Activated naive CD4-positive, alpha-beta T cell treated with anti-CD3 and anti-CD28 coated beads for 36 hours (primary cell): ENCODE measurements at regions of chr20 and their contacts with region 1.

Region 1: DNA sequence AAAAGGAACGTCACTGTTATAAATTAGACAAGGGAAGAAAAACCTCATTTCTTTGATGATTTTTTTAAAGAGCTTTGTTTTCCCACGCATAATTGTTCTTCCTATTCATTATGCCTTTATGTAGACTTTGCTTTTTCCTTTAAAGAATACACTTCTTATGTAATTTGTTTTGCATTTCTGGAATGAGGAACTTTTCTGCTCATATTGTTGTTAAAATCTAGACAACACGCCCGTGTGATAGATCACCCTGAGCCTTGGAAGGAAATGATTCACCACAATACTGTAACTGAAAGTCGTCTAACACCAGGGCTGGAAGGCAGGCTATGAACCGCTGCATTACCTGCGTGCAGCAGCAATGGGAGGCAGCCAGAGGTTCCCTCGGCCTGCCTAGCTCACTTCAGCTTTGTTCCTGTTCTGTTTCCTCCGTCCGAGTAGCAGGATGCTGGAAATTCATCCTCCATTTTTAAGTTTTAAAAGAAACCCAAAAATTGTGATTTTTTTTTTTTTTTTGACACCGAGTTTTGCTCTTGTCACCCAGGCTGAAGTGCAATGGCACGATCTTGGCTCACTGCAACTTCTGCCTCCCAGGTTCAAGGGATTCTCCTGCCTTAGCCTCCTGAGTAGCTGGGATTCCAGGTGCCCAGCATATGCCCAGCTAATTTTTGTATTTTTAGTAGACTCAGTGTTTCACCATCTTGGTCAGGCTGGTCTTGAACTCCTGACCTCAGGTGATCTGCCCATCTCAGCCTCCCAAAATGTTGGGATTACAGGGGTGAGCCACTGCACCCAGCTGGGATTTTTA is 49.6 kb upstream of the ZNF217 start:
- DNase-seq: peak; percentile 82
- H3K4me3 Mint-ChIP-seq: peak overlapping the region; percentile 66
- H3K27ac Mint-ChIP-seq: peak overlapping the region; percentile 85
- H3K4me1 Mint-ChIP-seq: peaks cover 40% of the 10 kb centered on the region
- H3K27me3 Mint-ChIP-seq: no peaks in the 10 kb centered on the region

Region 2: DNA sequence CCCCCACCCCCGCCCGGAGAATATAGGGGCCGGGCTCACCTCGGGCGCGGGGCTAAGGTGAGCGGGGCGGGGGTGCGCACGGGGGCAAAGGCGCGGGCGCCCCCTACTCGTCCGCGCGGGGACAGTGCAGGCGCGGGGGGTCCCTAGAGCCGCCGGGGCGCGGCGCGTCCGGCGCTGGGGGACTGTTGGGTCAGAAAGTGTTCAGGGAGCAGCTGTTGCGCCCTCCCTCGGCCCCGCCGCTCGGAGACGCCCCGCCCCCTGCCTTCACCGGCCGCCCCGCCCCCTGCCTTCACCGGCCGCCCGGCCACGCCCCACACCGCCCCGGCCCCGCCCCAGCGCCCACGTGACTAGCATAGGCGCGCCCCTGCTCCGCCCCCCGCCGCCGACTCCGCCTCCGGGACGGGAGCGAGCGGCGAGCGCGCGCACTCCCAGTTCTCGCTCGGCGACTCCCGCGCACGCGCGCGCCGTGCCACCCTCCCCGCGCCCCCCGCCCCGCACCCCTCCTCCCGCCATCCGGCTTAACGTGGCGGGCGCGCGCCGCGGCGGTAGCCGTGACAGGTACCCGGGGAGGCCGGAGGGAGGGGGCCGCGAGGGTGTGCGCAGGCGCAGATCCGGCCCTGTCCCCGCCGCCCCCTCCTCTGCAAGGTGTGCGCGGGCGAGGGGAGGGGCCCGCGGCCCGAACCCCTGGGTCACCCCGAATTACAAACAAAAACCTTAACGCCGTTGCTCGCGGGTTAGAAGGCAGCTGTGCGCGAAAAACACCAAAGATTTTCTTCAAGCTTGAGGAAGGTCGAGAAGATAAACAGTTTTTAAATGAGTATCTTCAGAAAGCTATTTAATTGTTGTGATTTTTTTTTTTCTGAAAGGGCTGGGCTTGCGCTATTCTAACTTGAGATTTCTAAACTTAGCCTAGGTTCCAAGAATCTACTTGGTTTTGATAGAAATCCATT is 48.9 kb before region 1 on chr20:
- CTCF ChIA-PET with region 1: no interaction called
- intact Hi-C with region 1: loop called (anchors 1 kb)
- DNase-seq: peak; percentile 96
- H3K4me3 Mint-ChIP-seq: peak overlapping the region; percentile 94
- H3K27ac Mint-ChIP-seq: peak overlapping the region; percentile 99
- H3K4me1 Mint-ChIP-seq: peaks cover 51% of the 10 kb centered on the region
- H3K27me3 Mint-ChIP-seq: no peaks in the 10 kb centered on the region

Region 3: GRCh38 chr20:53623454-53624211 is 19.6 kb before region 1 on chr20:
- CTCF ChIA-PET with region 1: interaction called, 9 read pairs
- intact Hi-C with region 1: loop called (anchors 1 kb)
- DNase-seq: peak; percentile 65
- H3K4me3 Mint-ChIP-seq: peak overlapping the region; percentile 74
- H3K27ac Mint-ChIP-seq: peak overlapping the region; percentile 92
- H3K4me1 Mint-ChIP-seq: peaks cover 40% of the 10 kb centered on the region
- H3K27me3 Mint-ChIP-seq: no peaks in the 10 kb centered on the region

Region 4: GRCh38 chr20:53692413-53693067 is 49.3 kb after region 1 on chr20:
- CTCF ChIA-PET with region 1: no interaction called
- intact Hi-C with region 1: loop called (anchors 2 kb)
- DNase-seq: no peak
- H3K4me3 Mint-ChIP-seq: peak overlapping the region; percentile 17
- H3K27ac Mint-ChIP-seq: no peak overlapping the region
- H3K4me1 Mint-ChIP-seq: peaks cover 38% of the 10 kb centered on the region
- H3K27me3 Mint-ChIP-seq: no peaks in the 10 kb centered on the region

Region 5: DNA sequence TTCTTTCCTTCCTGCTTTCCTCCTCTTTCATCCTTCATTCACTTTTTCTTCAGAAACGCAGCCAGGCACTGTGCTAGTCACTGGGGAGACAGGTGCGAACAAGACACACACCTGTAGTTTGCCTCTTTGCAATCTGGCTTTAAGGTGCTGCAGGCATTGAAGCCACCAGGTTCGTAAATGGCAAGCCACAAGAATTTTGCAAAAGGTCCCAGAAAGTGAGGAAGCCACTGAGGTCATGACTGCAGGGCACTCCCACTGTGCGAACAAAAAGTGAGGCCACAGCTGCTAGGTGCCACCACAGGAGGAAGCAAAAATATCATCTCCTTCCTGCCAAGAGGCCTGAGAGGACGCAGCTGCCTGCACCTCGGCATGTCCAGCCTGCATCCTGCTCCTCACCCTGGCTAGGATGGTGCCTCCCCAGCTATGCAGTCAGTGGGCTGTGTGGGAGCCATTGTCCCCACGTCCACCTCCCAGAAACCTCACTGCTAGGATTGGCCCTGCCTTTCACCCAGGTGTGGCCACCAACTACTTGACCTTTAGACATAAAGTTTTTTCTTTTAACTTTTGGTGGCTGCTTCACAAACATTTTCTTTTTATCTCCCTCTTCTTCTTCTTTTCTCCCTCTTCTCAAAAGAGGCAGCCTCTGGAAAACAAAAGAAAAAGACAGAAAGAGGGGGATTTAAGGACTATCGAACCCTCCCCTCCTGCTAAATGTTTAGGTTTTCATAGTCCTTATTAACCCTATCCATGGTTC is 196.4 kb after region 1 on chr20:
- CTCF ChIA-PET with region 1: no interaction called
- intact Hi-C with region 1: loop called (anchors 5 kb)
- DNase-seq: peak; percentile 65
- H3K4me3 Mint-ChIP-seq: peak overlapping the region; percentile 51
- H3K27ac Mint-ChIP-seq: peak overlapping the region; percentile 78
- H3K4me1 Mint-ChIP-seq: peaks cover 73% of the 10 kb centered on the region
- H3K27me3 Mint-ChIP-seq: no peaks in the 10 kb centered on the region

Region 6: GRCh38 chr20:54172818-54173652 is 529.8 kb after region 1 on chr20:
- CTCF ChIA-PET with region 1: no interaction called
- intact Hi-C with region 1: no loop called
- DNase-seq: no peak
- H3K4me3 Mint-ChIP-seq: peak overlapping the region; percentile 38
- H3K27ac Mint-ChIP-seq: no peak overlapping the region
- H3K4me1 Mint-ChIP-seq: peaks cover 21% of the 10 kb centered on the region
- H3K27me3 Mint-ChIP-seq: peaks cover 76% of the 10 kb centered on the region